ENCODE measurements at regions of chr15 and their contacts with region 1.

Region 1: GRCh38 chr15:50166216-50166615 is 15.8 kb upstream of the SLC27A2 start:
- DNase-seq: peak; percentile 60
- H3K4me3 ChIP-seq: no peak overlapping the region
- H3K27me3 ChIP-seq: no peaks in the 10 kb centered on the region
- CTCF ChIP-seq: no peak

Region 2: GRCh38 chr15:50187997-50188396 is 21.8 kb after region 1 on chr15:
- CTCF ChIA-PET with region 1: interaction called, 5 read pairs
- POLR2A ChIA-PET with region 1: interaction called, 24 read pairs
- DNase-seq: no peak
- H3K4me3 ChIP-seq: no peak overlapping the region
- H3K27me3 ChIP-seq: peaks cover 1% of the 10 kb centered on the region; the same call in 1 of the 2 replicates
- CTCF ChIP-seq: no peak

Region 3: DNA sequence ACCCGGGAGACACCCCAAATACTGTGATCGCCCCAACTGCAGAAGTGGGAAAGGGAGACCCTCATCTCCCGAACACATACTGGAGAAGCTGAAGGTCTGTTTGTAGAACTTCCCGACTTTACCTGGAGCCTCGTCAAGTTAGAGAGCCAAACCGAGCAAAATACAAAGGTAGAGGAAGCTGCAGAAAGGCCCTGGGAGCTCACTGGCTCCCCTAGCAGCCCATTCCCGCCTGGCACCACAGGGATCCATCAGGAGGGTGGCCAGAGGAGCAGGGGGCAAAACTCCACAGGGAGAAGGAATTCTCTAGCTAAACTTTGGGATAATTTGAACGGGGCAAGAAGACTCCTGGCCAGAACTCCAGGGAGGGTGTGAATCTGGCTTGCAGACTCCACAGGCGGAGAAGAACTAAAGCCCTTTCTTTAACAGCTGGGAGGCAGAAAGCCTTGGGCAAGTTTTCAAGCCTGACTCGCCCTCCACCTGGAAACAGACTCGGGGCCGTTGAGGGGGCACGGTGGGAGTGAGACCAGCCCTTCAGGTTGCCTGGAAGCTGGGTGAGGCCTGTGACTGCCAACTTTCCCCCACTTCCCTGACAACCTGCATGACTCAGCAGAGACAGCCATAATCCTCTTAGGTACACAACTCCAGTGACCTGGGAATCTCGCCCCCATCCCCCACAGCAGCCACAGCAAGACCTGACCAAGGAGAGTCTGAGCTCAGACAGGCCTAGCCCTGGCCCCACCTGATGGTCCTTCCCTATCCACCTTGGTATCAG is 44.3 kb after region 1 on chr15:
- CTCF ChIA-PET with region 1: no interaction called
- POLR2A ChIA-PET with region 1: no interaction called
- DNase-seq: no peak
- H3K4me3 ChIP-seq: no peak overlapping the region
- H3K27me3 ChIP-seq: no peaks in the 10 kb centered on the region
- CTCF ChIP-seq: no peak

Measured in BJ (cell line).